Calu3 (cell line): ENCODE measurements at regions of chr16 and their contacts with region 1.

Region 1: DNA sequence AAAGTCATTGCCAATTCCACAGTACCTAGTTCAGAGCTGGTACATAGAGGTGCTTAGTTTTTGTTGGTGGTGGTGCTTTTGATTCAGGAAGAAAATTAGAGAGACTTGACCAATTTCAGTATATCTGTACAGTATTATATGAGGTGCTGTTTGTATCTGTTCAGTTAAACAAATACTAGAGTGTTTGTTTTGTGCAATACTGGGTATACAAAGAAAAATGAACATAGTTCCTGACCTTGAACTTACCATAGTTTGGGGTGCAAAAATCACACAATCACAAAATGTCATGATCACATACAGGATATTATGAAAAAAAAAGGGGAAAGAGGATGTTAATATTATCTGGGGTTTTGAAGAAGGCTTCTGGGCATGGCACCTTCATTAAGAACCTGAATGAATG is 39.8 kb upstream of the GOT2 start:
- DNase-seq: no peak
- H3K4me3 Mint-ChIP-seq: no peak overlapping the region
- H3K27ac Mint-ChIP-seq: no peak overlapping the region
- H3K4me1 Mint-ChIP-seq: no peaks in the 10 kb centered on the region
- H3K27me3 Mint-ChIP-seq: peaks cover 42% of the 10 kb centered on the region
- CTCF ChIP-seq: no peak

Region 2: GRCh38 chr16:58709333-58709732 is 64.5 kb before region 1 on chr16:
- CTCF ChIA-PET with region 1: no interaction called
- intact Hi-C with region 1: no loop called
- DNase-seq: no peak
- H3K4me3 Mint-ChIP-seq: no peak overlapping the region
- H3K27ac Mint-ChIP-seq: no peak overlapping the region
- H3K4me1 Mint-ChIP-seq: no peaks in the 10 kb centered on the region
- H3K27me3 Mint-ChIP-seq: no peaks in the 10 kb centered on the region
- CTCF ChIP-seq: no peak

Region 3: DNA sequence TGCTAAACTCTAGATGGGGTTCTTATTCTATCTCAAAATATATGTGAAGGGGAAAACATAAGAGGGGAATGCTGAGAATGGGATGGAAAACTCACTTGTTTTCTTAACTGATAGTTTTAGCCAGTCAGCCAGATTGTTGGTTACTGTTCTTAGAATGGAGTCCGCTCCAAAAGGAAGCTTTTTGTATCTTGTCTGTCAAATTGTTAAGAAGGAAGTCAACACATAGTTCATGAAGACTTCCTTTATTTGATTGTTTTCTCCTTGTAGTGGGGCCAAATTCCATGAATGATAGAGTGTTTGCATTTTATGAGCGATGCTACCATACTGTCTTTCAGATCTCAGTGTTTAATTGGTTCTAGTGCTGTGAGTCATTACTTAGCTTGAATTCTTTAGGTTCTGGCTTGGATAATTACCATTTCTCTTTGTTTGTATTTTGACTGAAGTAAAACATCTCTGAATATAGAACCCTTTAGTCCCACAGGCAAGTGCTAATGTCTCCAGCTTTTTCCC is 58.6 kb after region 1 on chr16:
- CTCF ChIA-PET with region 1: no interaction called
- intact Hi-C with region 1: loop called (anchors 10 kb)
- DNase-seq: no peak
- H3K4me3 Mint-ChIP-seq: no peak overlapping the region
- H3K27ac Mint-ChIP-seq: no peak overlapping the region
- H3K4me1 Mint-ChIP-seq: no peaks in the 10 kb centered on the region
- H3K27me3 Mint-ChIP-seq: peaks cover 15% of the 10 kb centered on the region
- CTCF ChIP-seq: no peak